Head of caudate nucleus (tissue), 42 donors: ENCODE measurements at regions of chr19 and their contacts with region 1.

Region 1: DNA sequence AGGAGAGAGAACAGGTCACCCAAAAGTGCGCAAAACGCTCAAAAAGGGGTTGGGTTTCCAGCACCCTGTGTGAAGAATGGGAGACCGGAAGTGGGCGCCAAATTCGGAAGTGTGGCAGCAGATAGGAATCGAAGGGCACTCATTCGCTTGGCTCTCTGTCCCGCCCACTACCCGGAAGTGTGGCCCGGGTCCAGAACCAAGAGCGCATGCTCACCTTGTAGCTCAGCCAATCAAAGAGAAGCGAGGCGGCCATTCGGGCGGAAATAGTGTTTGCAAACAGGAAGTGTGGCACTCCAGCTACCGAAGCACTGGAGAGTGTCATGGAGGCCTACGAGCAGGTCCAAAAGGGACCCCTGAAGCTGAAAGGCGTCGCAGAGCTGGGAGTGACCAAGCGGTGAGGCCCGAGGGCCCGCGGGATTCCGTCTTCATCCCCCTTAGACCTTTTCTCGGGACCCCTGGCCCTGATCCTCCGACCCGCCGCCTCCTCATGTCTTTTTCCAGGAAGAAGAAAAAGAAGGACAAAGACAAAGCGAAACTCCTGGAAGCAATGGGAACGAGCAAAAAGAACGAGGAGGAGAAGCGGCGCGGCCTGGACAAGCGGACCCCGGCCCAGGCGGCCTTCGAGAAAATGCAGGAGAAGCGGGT is at the start of gene FAM32A:
- DNase-seq: peak; percentile 91 to 99 (median 97)

Region 2: DNA sequence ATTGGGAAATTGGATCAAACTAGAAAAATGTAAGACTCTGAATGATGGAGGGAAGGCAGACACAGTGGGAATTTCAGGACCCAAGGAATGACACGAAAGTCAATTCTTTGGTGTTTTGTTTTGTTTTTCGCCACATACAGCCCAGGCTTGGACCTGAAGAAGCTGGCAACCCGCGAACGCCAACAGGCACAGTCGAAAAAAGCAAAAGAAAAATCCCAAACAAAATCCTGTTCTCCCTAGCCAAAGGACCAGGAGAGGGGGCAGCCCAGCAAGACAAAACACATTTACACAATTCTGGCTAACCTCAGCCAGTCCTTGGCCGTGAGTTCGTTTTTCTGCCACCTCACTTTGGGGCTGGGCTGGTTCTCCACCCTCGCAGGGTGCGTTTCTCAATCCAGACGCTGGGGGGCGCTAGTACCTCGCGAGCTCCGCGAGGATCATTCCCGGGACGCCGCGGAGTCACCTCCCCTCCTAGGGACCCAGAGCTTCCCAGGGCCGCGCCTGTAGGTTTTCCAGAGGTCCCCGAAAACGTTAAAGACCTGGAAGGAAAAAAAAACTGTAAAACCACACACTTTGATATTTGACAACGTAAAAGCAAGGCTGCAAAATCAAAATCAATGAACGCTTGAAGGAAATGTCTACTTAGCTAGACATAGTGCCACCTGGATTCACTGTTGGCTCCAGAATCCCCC is 143.8 kb before region 1 on chr19:
- intact Hi-C with region 1: loop called (anchors 2 kb)
- DNase-seq: peak; percentile 42 to 93 (median 84)